CD4-positive, alpha-beta memory T cell (primary cell): ENCODE measurements at regions of chr3 and their contacts with region 1.

Region 1: DNA sequence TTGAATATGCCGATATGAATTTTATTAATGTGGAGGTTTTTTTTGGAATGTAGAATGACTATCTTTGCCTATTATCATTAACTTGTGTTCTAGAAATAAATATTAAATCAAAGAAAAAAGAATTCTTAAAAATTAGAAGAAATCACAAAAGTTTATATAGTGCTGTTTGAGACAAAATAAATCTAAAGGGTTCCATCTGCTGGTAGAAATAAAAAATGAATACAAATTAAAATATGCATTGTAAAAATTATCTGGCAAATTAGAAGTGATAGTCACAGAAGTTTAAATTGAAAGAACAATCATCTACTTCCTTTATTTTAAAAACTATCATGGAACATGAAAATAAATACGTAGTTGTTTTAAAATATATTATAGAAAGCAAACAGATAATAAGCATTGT is 22.7 kb upstream of the ZBTB20 start:
- DNase-seq: peak in 4 of 5 donors; percentile 16 to 40 (median 27)
- H3K4me3 ChIP-seq: no peak overlapping the region
- H3K4me3 Mint-ChIP-seq: no peak overlapping the region
- H3K27ac ChIP-seq: no peak overlapping the region
- H3K27ac Mint-ChIP-seq: no peak overlapping the region
- H3K4me1 ChIP-seq: peaks cover 14% of the 10 kb centered on the region
- H3K4me1 Mint-ChIP-seq: peaks cover 12 to 13% (median 12%) of the 10 kb centered on the region in 4 donors
- H3K27me3 ChIP-seq: no peaks in the 10 kb centered on the region
- H3K27me3 Mint-ChIP-seq: no peaks in the 10 kb centered on the region

Region 2: DNA sequence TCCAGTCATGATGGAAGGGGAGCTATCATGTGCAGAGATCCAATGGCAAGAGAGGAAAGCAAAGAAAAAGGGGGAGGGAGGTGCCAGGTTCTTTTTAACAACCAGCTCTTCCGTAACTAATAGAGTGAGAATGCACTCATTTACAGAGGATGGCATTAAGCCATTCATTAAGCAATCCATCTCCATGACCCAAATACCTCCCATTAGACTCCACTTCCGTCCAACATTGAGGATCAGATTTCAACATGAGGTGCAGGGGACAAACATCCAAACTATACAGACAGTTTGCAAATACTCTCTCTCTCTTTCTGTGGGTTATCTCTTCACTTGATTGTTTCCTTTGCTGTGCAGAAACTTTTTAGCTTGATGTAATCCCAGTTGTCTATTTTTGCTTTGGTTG is 1200.8 kb before region 1 on chr3:
- CTCF ChIA-PET with region 1: no interaction called
- POLR2A ChIA-PET with region 1: no interaction called
- intact Hi-C with region 1: no loop called
- DNase-seq: no peak
- H3K4me3 ChIP-seq: no peak overlapping the region
- H3K4me3 Mint-ChIP-seq: no peak overlapping the region
- H3K27ac ChIP-seq: no peak overlapping the region
- H3K27ac Mint-ChIP-seq: no peak overlapping the region
- H3K4me1 ChIP-seq: no peaks in the 10 kb centered on the region
- H3K4me1 Mint-ChIP-seq: peaks cover 3 to 10% (median 4%) of the 10 kb centered on the region in 4 donors
- H3K27me3 ChIP-seq: no peaks in the 10 kb centered on the region
- H3K27me3 Mint-ChIP-seq: no peaks in the 10 kb centered on the region

Region 3: GRCh38 chr3:114152519-114153151 is 1017.2 kb before region 1 on chr3:
- CTCF ChIA-PET with region 1: no interaction called
- POLR2A ChIA-PET with region 1: no interaction called
- intact Hi-C with region 1: loop called (anchors 5 kb)
- DNase-seq: peak; percentile 76 to 81 (median 78)
- H3K4me3 ChIP-seq: peak overlapping the region in 1 of 2 donors; percentile 34
- H3K4me3 Mint-ChIP-seq: peak overlapping the region; percentile 58 to 76 (median 68)
- H3K27ac ChIP-seq: no peak overlapping the region
- H3K27ac Mint-ChIP-seq: peak overlapping the region in 6 of 7 donors; percentile 4 to 79 (median 46)
- H3K4me1 ChIP-seq: peaks cover 6% of the 10 kb centered on the region
- H3K4me1 Mint-ChIP-seq: peaks cover 0 to 6% (median 5%) of the 10 kb centered on the region in 4 donors
- H3K27me3 ChIP-seq: no peaks in the 10 kb centered on the region
- H3K27me3 Mint-ChIP-seq: no peaks in the 10 kb centered on the region

Region 4: GRCh38 chr3:114827495-114827894 is 342.3 kb before region 1 on chr3:
- CTCF ChIA-PET with region 1: interaction called, 3 read pairs
- POLR2A ChIA-PET with region 1: no interaction called
- intact Hi-C with region 1: loop called (anchors 1 kb)
- DNase-seq: peak in 4 of 5 donors; percentile 1 to 9 (median 4)
- H3K4me3 ChIP-seq: no peak overlapping the region
- H3K4me3 Mint-ChIP-seq: no peak overlapping the region
- H3K27ac ChIP-seq: no peak overlapping the region
- H3K27ac Mint-ChIP-seq: no peak overlapping the region
- H3K4me1 ChIP-seq: no peaks in the 10 kb centered on the region
- H3K4me1 Mint-ChIP-seq: peaks cover 0 to 4% (median 2%) of the 10 kb centered on the region in 4 donors
- H3K27me3 ChIP-seq: no peaks in the 10 kb centered on the region
- H3K27me3 Mint-ChIP-seq: no peaks in the 10 kb centered on the region

Region 5: DNA sequence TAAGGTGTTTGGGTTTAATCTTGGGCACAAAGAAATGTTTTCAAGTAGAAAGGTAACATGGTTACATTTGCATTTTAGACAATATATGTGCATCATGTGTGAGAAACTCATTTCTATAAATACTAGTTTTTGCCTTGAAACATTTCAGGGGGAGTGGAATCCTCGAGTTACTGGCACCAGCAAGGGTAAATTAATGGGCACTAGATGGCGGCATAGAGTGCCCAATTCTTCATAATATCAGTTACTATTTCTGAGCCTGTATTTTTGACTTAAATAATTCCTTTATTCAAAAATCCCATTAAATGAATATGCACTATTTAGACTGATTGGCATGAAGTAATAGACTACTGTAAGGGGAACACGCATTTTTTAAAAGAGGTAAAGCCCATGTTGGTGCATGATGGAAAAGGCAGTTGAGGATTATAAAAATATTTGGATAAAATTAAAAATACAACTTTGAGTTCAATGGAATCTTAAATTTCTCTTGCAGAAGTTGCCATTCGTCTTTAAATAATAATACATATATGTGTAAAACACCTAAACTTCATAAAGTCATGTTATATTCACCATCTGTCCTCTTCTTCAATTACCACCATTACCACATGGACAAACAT is 129.0 kb before region 1 on chr3:
- CTCF ChIA-PET with region 1: interaction called, 20 read pairs
- POLR2A ChIA-PET with region 1: no interaction called
- intact Hi-C with region 1: loop called (anchors 1 kb)
- DNase-seq: peak in 4 of 5 donors; percentile 18 to 31 (median 24)
- H3K4me3 ChIP-seq: no peak overlapping the region
- H3K4me3 Mint-ChIP-seq: no peak overlapping the region
- H3K27ac ChIP-seq: no peak overlapping the region
- H3K27ac Mint-ChIP-seq: peak overlapping the region in 2 of 7 donors; percentile 65 to 66
- H3K4me1 ChIP-seq: no peaks in the 10 kb centered on the region
- H3K4me1 Mint-ChIP-seq: peaks cover 0 to 14% (median 8%) of the 10 kb centered on the region in 4 donors
- H3K27me3 ChIP-seq: no peaks in the 10 kb centered on the region
- H3K27me3 Mint-ChIP-seq: no peaks in the 10 kb centered on the region

Region 6: GRCh38 chr3:115092220-115092791 is 77.5 kb before region 1 on chr3:
- CTCF ChIA-PET with region 1: interaction called, 197 read pairs
- POLR2A ChIA-PET with region 1: interaction called, 11 read pairs
- intact Hi-C with region 1: loop called (anchors 1 kb)
- DNase-seq: peak; percentile 43 to 62 (median 48)
- H3K4me3 ChIP-seq: no peak overlapping the region
- H3K4me3 Mint-ChIP-seq: no peak overlapping the region
- H3K27ac ChIP-seq: no peak overlapping the region
- H3K27ac Mint-ChIP-seq: no peak overlapping the region
- H3K4me1 ChIP-seq: peaks cover 4% of the 10 kb centered on the region
- H3K4me1 Mint-ChIP-seq: peaks cover 12 to 20% (median 16%) of the 10 kb centered on the region in 4 donors
- H3K27me3 ChIP-seq: no peaks in the 10 kb centered on the region
- H3K27me3 Mint-ChIP-seq: no peaks in the 10 kb centered on the region

Region 7: GRCh38 chr3:115099986-115100571 is 69.7 kb before region 1 on chr3:
- CTCF ChIA-PET with region 1: interaction called, 197 read pairs
- POLR2A ChIA-PET with region 1: interaction called, 33 read pairs
- intact Hi-C with region 1: no loop called
- DNase-seq: peak; percentile 64 to 76 (median 72)
- H3K4me3 ChIP-seq: peak overlapping the region; percentile 21 to 46
- H3K4me3 Mint-ChIP-seq: peak overlapping the region; percentile 80 to 93 (median 88)
- H3K27ac ChIP-seq: peak overlapping the region; percentile 35
- H3K27ac Mint-ChIP-seq: peak overlapping the region; percentile 77 to 95 (median 89)
- H3K4me1 ChIP-seq: peaks cover 32% of the 10 kb centered on the region
- H3K4me1 Mint-ChIP-seq: peaks cover 29 to 36% (median 33%) of the 10 kb centered on the region in 4 donors
- H3K27me3 ChIP-seq: no peaks in the 10 kb centered on the region
- H3K27me3 Mint-ChIP-seq: no peaks in the 10 kb centered on the region

Region 8: GRCh38 chr3:115127208-115127607 is 42.6 kb before region 1 on chr3:
- CTCF ChIA-PET with region 1: no interaction called
- POLR2A ChIA-PET with region 1: no interaction called
- intact Hi-C with region 1: no loop called
- DNase-seq: no peak
- H3K4me3 ChIP-seq: no peak overlapping the region
- H3K4me3 Mint-ChIP-seq: no peak overlapping the region
- H3K27ac ChIP-seq: no peak overlapping the region
- H3K27ac Mint-ChIP-seq: no peak overlapping the region
- H3K4me1 ChIP-seq: no peaks in the 10 kb centered on the region
- H3K4me1 Mint-ChIP-seq: peaks cover 14 to 16% (median 15%) of the 10 kb centered on the region in 4 donors
- H3K27me3 ChIP-seq: no peaks in the 10 kb centered on the region
- H3K27me3 Mint-ChIP-seq: no peaks in the 10 kb centered on the region

Region 9: DNA sequence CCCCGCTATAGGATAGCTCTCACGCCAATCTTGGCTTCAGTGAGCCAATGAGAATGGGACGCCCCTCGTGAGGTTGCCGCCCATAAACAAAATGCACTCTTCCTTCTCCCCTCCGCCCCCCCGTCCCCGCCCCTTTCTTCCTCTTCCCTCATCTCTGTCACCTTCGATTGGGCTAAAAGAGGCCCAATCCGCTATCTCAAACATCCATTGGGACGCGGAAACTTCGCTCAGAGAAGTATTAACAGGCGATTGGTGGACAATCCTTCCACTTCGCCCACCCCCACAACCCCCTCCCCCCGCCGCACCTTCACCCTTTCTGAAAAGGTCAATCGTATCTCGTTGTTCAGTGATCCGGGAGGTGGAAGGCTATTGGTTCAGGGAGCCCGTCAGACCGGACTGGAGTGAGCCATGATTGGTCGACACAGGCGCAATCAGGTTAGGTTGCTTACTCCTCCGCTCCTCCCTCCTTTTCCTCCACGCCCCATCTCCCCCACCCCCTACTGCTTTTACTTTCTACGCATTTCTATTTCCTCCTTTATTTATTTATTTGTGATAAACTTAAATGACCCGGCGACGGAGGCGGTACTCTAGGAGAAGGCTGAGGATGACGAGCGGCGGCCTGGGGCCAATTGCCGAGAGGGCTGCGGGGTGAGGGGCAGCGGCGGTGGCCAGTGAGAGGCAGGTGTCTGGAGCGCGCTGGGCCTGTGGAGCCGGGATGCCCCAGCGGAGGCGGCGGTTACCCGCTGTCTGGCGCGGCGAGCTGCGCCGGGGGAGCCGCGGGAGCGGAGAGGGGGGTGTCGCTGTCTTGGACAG is 22.3 kb before region 1 on chr3:
- CTCF ChIA-PET with region 1: interaction called, 83 read pairs
- POLR2A ChIA-PET with region 1: interaction called, 289 read pairs
- intact Hi-C with region 1: loop called (anchors 1 kb)
- DNase-seq: peak; percentile 97 to 100 (median 98)
- H3K4me3 ChIP-seq: peak overlapping the region; percentile 43 to 73
- H3K4me3 Mint-ChIP-seq: peak overlapping the region; percentile 93 to 100 (median 98)
- H3K27ac ChIP-seq: peak overlapping the region; percentile 97
- H3K27ac Mint-ChIP-seq: peak overlapping the region; percentile 90 to 100 (median 100)
- H3K4me1 ChIP-seq: peaks cover 25% of the 10 kb centered on the region
- H3K4me1 Mint-ChIP-seq: peaks cover 16 to 48% (median 28%) of the 10 kb centered on the region in 4 donors
- H3K27me3 ChIP-seq: no peaks in the 10 kb centered on the region
- H3K27me3 Mint-ChIP-seq: no peaks in the 10 kb centered on the region

Region 10: GRCh38 chr3:115208066-115208750 is 38.4 kb after region 1 on chr3:
- CTCF ChIA-PET with region 1: no interaction called
- POLR2A ChIA-PET with region 1: no interaction called
- intact Hi-C with region 1: no loop called
- DNase-seq: no peak
- H3K4me3 ChIP-seq: no peak overlapping the region
- H3K4me3 Mint-ChIP-seq: no peak overlapping the region
- H3K27ac ChIP-seq: no peak overlapping the region
- H3K27ac Mint-ChIP-seq: no peak overlapping the region
- H3K4me1 ChIP-seq: no peaks in the 10 kb centered on the region
- H3K4me1 Mint-ChIP-seq: no peaks in the 10 kb centered on the region
- H3K27me3 ChIP-seq: no peaks in the 10 kb centered on the region
- H3K27me3 Mint-ChIP-seq: peaks cover 0 to 4% of the 10 kb centered on the region in 2 donors

Region 11: GRCh38 chr3:115218859-115219258 is 49.1 kb after region 1 on chr3:
- CTCF ChIA-PET with region 1: no interaction called
- POLR2A ChIA-PET with region 1: no interaction called
- intact Hi-C with region 1: no loop called
- DNase-seq: no peak
- H3K4me3 ChIP-seq: no peak overlapping the region
- H3K4me3 Mint-ChIP-seq: no peak overlapping the region
- H3K27ac ChIP-seq: no peak overlapping the region
- H3K27ac Mint-ChIP-seq: no peak overlapping the region
- H3K4me1 ChIP-seq: no peaks in the 10 kb centered on the region
- H3K4me1 Mint-ChIP-seq: no peaks in the 10 kb centered on the region
- H3K27me3 ChIP-seq: no peaks in the 10 kb centered on the region
- H3K27me3 Mint-ChIP-seq: peaks cover 3 to 6% of the 10 kb centered on the region in 2 donors